ENCODE measurements at regions of chr5 and their contacts with region 1.

Region 1: DNA sequence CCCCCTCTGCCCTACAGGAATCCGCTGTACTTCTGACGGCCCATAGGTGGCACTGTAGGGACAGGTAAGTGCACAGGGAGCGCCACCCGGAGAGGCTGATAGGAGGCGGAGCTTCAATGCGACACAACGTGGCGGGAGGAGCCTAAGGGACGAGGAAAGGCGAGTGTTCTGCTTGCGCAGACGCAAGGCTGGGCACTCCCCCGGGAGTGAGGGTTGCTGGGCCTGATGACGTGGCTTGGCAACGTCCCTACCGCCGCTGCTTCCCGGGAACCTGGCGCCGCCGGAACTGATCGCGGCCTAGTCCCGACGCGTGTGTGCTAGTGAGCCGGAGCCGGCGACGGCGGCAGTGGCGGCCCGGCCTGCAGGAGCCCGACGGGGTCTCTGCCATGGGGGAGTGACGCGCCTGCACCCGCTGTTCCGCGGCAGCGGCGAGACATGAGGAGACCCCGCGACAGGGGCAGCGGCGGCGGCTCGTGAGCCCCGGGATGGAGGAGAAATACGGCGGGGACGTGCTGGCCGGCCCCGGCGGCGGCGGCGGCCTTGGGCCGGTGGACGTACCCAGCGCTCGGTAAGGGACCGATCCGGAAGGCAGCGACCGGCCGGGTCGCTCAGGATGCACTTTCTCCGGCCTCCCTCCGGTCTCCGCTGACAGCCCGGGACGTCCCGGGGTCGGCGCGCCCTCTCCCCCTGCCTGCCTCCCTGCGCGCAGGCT is at the start of gene SLC30A5:
- DNase-seq: peak; percentile 99 to 100
- H3K4me3 ChIP-seq: peak within 1 kb of the TSS; percentile 86 to 93
- H3K27ac ChIP-seq: peak within 1 kb of the TSS; percentile 91 to 94
- H3K4me1 ChIP-seq: peaks cover 0 to 12% of the 10 kb centered on the region in 2 donors
- H3K27me3 ChIP-seq: no peaks in the 10 kb centered on the region
- CTCF ChIP-seq: peak; percentile 90 to 92 (median 90)
- total RNA-seq, gene SLC30A5: 20.6 TPM

Region 2: GRCh38 chr5:68780299-68780955 is 313.5 kb before region 1 on chr5:
- intact Hi-C with region 1: no loop called
- DNase-seq: no peak
- H3K4me3 ChIP-seq: no peak overlapping the region
- H3K27ac ChIP-seq: no peak overlapping the region
- H3K4me1 ChIP-seq: no peaks in the 10 kb centered on the region
- H3K27me3 ChIP-seq: no peaks in the 10 kb centered on the region
- CTCF ChIP-seq: no peak

Region 3: GRCh38 chr5:69024241-69024651 is 69.7 kb before region 1 on chr5:
- intact Hi-C with region 1: no loop called
- DNase-seq: no peak
- H3K4me3 ChIP-seq: no peak overlapping the region
- H3K27ac ChIP-seq: no peak overlapping the region
- H3K4me1 ChIP-seq: no peaks in the 10 kb centered on the region
- H3K27me3 ChIP-seq: no peaks in the 10 kb centered on the region
- CTCF ChIP-seq: peak in 2 of 3 experiments; percentile 18 to 19

Region 4: DNA sequence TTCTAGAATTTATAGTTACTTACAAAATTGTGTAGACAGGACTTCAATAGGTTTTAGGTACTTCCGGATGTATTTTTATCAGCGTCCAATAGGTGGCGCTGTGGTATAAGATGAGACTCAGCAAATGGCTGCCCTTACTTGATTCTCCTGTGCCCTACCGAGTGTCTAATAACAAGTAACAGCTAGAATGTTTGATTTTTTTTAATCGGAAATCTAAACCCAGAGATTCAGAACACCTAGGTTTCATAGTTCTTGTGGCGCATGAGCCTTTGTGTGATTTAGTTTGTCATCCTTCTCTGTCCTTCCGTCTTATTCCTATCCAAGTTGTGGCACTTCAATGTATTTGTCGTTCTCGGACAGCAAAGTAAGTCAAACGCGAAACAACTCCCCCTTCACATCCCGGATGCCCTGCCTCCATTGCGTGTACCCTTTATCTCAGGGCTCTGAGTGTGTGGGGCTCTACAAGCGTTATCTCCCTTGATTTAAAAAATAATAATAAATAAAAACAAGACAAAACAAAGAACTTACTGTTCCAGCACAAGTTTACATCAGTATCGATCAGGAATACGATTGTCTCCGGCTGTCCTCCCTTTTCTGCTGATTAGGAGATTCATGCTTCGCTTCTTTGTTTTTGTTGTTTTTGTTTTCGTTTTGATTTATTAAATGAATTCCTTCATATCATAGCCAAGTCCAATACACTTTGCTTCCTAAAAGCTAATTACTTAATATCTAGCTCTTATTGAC is 50.8 kb before region 1 on chr5:
- intact Hi-C with region 1: loop called (anchors 2 kb)
- DNase-seq: peak; percentile 15 to 88
- H3K4me3 ChIP-seq: peak overlapping the region; percentile 57 to 62
- H3K27ac ChIP-seq: peak overlapping the region; percentile 54 to 60
- H3K4me1 ChIP-seq: no peaks in the 10 kb centered on the region
- H3K27me3 ChIP-seq: no peaks in the 10 kb centered on the region
- CTCF ChIP-seq: peak; percentile 61 to 84 (median 83)

Region 5: GRCh38 chr5:69129413-69129812 is 35.5 kb after region 1 on chr5:
- intact Hi-C with region 1: no loop called
- DNase-seq: no peak
- H3K4me3 ChIP-seq: no peak overlapping the region
- H3K27ac ChIP-seq: no peak overlapping the region
- H3K4me1 ChIP-seq: no peaks in the 10 kb centered on the region
- H3K27me3 ChIP-seq: no peaks in the 10 kb centered on the region
- CTCF ChIP-seq: no peak

Region 6: GRCh38 chr5:69189162-69190086 is 95.5 kb after region 1 on chr5 and contains the start of gene CENPH:
- intact Hi-C with region 1: loop called (anchors 2 kb)
- DNase-seq: peak; percentile 52 to 93
- H3K4me3 ChIP-seq: peak within 1 kb of the TSS; percentile 82 to 85
- H3K27ac ChIP-seq: peak within 1 kb of the TSS; percentile 75
- H3K4me1 ChIP-seq: peaks cover 0 to 4% of the 10 kb centered on the region in 2 donors
- H3K27me3 ChIP-seq: no peaks in the 10 kb centered on the region
- CTCF ChIP-seq: no peak
- total RNA-seq, gene CENPH: not detected

Region 7: DNA sequence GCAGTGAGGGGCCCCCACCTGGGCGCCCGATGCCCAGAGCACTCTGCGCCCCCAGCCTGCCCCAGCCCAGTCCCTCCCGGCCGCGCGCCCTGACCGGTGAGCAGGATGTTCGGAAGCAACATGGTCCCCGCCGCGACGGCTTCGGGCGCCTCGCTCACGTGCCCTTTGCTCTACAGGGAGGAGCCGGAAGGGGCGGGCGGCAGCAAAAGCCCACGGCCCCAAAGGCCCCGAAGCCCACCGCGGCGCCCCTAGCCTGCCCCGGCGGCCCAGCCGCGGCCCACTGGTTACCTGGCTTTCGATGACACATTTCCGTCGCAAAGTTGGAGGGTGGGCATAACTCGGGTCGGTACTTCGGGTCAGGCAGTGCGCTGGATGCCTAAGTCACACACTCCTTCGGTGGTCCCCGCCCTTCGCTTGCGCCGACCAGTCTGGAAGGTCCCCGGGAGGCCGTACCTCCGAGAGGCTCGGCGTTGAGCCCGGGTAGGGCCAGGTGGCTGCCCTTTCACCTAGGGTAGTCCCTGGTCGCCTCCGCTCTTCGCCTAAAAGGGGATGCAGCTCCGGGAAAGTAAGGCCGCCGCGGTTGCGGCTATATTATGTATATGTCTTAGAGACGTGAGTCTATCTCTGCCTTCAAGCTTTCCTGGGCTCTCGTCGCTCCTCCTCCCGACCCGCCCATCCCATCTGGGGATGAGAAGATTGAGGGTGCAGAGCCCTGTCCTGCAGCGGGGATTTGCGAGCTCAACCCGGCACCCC is 275.6 kb after region 1 on chr5 and contains the starts of genes AK6, RAD17 and TAF9:
- intact Hi-C with region 1: loop called (anchors 1 kb)
- DNase-seq: peak; percentile 73 to 94
- H3K4me3 ChIP-seq: peak within 1 kb of the TSS; percentile 70 to 81
- H3K27ac ChIP-seq: peak within 1 kb of the TSS; percentile 90 to 94
- H3K4me1 ChIP-seq: peaks cover 7 to 18% of the 10 kb centered on the region in 2 donors
- H3K27me3 ChIP-seq: no peaks in the 10 kb centered on the region
- CTCF ChIP-seq: no peak
- total RNA-seq, gene AK6: 3.9 TPM
- total RNA-seq, gene RAD17: 24.4 TPM
- total RNA-seq, gene TAF9: 6.3 TPM